Stomach (tissue), 19 donors: ENCODE measurements at regions of chr22 and their contacts with region 1.

Region 1: GRCh38 chr22:40645579-40646197 is 9.2 kb upstream of the MRTFA start:
- DNase-seq: no peak
- H3K4me3 ChIP-seq: no peak overlapping the region
- H3K27ac ChIP-seq: peak overlapping the region; percentile 62 to 80 (median 79)
- H3K4me1 ChIP-seq: peaks cover 9 to 52% (median 20%) of the 10 kb centered on the region in 4 donors
- H3K27me3 ChIP-seq: no peaks in the 10 kb centered on the region
- CTCF ChIP-seq: no peak
- EP300 ChIP-seq: no peak
- POLR2A ChIP-seq: no peak

Region 2: GRCh38 chr22:40436505-40437451 is 208.9 kb before region 1 on chr22:
- intact Hi-C with region 1: loop called (anchors 5 kb)
- DNase-seq: peak in 1 of 2 donors; percentile 83
- H3K4me3 ChIP-seq: peak overlapping the region in 2 of 4 donors; percentile 13 to 24
- H3K27ac ChIP-seq: peak overlapping the region; percentile 6 to 74 (median 71)
- H3K4me1 ChIP-seq: peaks cover 20 to 86% (median 47%) of the 10 kb centered on the region in 4 donors
- H3K27me3 ChIP-seq: no peaks in the 10 kb centered on the region
- CTCF ChIP-seq: peak in 5 of 7 experiments; percentile 52 to 70 (median 65)
- EP300 ChIP-seq: no peak
- POLR2A ChIP-seq: no peak